PC-9 (cell line): ENCODE measurements at regions of chr4 and their contacts with region 1.

Region 1: DNA sequence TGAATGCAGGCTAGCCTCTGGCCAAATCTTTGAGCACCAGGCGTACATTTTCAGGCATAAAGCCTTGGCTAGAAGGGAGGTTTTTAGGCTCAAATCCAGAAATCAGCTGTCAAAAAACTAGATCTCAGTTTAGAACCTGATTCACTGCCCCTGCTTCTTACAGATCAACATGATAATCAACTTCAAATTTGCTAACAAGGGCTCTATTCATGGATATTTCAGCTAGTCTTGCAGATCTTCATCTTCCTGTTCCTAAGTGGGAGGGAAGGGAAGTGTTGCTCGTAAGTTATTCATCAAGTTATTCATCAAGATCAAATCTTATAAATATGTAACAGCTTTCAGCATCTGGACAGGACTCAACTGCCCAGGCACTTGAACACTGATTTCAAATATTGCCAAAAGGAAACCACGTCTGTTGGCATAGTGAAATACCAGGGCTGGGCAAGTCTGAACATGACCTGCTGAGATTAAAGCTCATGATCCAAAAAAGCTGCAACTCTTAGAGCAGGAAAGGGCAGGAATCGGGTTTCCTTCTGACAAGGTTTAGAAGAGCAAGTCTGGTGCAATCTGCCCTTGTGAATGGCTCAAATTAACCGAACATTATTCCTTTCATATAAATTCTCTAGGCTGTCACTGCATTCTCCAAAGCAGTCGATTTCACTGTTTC is 200.3 kb downstream of the PDGFC start:
- DNase-seq: peak in 1 of 2 experiments; percentile 58
- H3K4me3 ChIP-seq: no peak overlapping the region
- H3K27ac ChIP-seq: no peak overlapping the region
- H3K4me1 ChIP-seq: no peaks in the 10 kb centered on the region
- H3K27me3 ChIP-seq: no peaks in the 10 kb centered on the region
- CTCF ChIP-seq: no peak

Region 2: DNA sequence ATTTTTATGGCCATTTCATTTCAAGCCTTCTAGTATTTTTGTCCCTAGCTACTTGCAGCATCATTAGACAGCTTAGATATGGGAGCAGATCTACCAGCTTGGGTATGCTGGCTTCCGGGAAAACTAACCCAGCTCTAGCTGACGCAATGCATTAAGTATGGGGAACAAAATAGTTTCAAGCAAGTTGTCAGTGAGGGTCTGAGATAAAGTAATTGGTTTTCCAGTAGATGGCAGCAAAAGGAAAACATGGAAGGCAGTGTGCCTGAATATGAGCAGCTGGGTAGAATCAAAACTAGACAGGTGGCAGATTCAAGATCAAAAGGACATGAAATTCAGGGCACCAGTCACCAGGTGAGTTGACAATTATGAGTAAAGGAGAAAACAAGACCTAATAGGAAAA is 476.7 kb before region 1 on chr4:
- CTCF ChIA-PET with region 1: no interaction called
- POLR2A ChIA-PET with region 1: no interaction called
- intact Hi-C with region 1: loop called (anchors 5 kb)
- DNase-seq: peak; percentile 37 to 44
- H3K4me3 ChIP-seq: no peak overlapping the region
- H3K27ac ChIP-seq: no peak overlapping the region
- H3K4me1 ChIP-seq: no peaks in the 10 kb centered on the region
- H3K27me3 ChIP-seq: no peaks in the 10 kb centered on the region
- CTCF ChIP-seq: no peak

Region 3: GRCh38 chr4:156906325-156906724 is 135.0 kb after region 1 on chr4:
- CTCF ChIA-PET with region 1: no interaction called
- POLR2A ChIA-PET with region 1: no interaction called
- intact Hi-C with region 1: no loop called
- DNase-seq: no peak
- H3K4me3 ChIP-seq: no peak overlapping the region
- H3K27ac ChIP-seq: no peak overlapping the region
- H3K4me1 ChIP-seq: no peaks in the 10 kb centered on the region
- H3K27me3 ChIP-seq: no peaks in the 10 kb centered on the region
- CTCF ChIP-seq: no peak

Region 4: GRCh38 chr4:156941940-156942548 is 170.7 kb after region 1 on chr4:
- CTCF ChIA-PET with region 1: no interaction called
- POLR2A ChIA-PET with region 1: no interaction called
- intact Hi-C with region 1: loop called (anchors 5 kb)
- DNase-seq: peak in 1 of 2 experiments; percentile 37
- H3K4me3 ChIP-seq: no peak overlapping the region
- H3K27ac ChIP-seq: no peak overlapping the region
- H3K4me1 ChIP-seq: no peaks in the 10 kb centered on the region
- H3K27me3 ChIP-seq: no peaks in the 10 kb centered on the region
- CTCF ChIP-seq: no peak

Region 5: GRCh38 chr4:157045507-157046127 is 274.3 kb after region 1 on chr4:
- CTCF ChIA-PET with region 1: no interaction called
- POLR2A ChIA-PET with region 1: no interaction called
- intact Hi-C with region 1: loop called (anchors 10 kb)
- DNase-seq: peak; percentile 25 to 52
- H3K4me3 ChIP-seq: no peak overlapping the region
- H3K27ac ChIP-seq: no peak overlapping the region
- H3K4me1 ChIP-seq: no peaks in the 10 kb centered on the region
- H3K27me3 ChIP-seq: no peaks in the 10 kb centered on the region
- CTCF ChIP-seq: peak; percentile 70